WTC11 (cell line): ENCODE measurements at regions of chr20 and their contacts with region 1.

Region 1: GRCh38 chr20:32779500-32780211 is 17.5 kb downstream of the DNMT3B start:
- DNase-seq: peak; percentile 81
- ATAC-seq: peak; percentile 45
- H3K4me3 Mint-ChIP-seq: no peak overlapping the region
- H3K27ac Mint-ChIP-seq: no peak overlapping the region
- H3K4me1 Mint-ChIP-seq: peaks cover 75% of the 10 kb centered on the region
- H3K27me3 Mint-ChIP-seq: no peaks in the 10 kb centered on the region
- CTCF ChIP-seq: no peak

Region 2: DNA sequence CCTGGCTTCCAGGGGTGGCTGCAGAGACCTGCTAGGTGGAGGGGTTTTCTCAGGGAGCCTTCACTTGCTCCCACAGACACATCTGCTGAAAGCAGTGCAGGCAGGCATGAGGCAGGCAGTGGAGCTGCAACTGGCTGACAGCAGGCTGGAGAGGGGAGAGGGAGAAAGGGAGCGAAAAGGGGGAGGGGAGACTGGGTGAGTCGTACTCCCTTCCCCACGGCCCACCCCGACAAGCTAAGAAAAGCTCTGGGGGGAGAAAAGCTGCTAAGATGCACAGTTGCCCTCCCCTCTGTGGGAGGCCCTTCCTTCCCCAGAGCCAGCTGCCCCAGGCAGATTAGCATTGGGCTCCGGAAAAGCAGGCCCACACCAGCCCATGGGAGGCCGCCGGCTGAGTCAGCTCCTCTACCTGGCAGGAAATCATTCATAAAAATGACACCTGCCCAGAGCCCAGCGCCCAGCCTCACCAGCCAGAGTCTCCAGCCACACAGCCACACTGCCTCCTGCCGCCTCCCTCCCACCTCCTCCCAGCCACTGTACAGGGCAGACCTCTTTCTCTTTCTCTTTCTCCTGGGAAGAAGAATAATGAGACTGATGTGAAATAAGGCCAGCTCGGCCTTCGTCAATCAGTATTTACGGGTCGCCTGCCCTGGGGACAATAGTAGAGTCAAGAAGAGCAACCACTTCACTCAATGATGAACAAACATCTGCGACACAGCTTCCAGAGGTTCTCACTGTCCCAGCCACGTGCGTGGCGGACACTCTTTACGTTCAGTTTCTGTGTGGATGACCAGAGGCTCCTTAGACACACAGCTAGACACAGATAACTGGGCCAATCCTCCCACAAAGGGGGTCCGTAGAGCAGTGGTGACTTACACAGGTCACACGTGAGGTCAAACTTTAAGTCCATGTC is 98.2 kb before region 1 on chr20:
- CTCF ChIA-PET with region 1: interaction called, 138 read pairs
- POLR2A ChIA-PET with region 1: interaction called, 7 read pairs
- DNase-seq: peak; percentile 63
- ATAC-seq: peak; percentile 80
- H3K4me3 Mint-ChIP-seq: peak overlapping the region; percentile 33
- H3K27ac Mint-ChIP-seq: peak overlapping the region; percentile 86
- H3K4me1 Mint-ChIP-seq: peaks cover 38% of the 10 kb centered on the region
- H3K27me3 Mint-ChIP-seq: no peaks in the 10 kb centered on the region
- CTCF ChIP-seq: no peak

Region 3: GRCh38 chr20:32702706-32703425 is 76.8 kb before region 1 on chr20:
- CTCF ChIA-PET with region 1: interaction called, 11 read pairs
- POLR2A ChIA-PET with region 1: no interaction called
- DNase-seq: peak; percentile 20
- ATAC-seq: peak; percentile 50; the same call in 1 of the 2 replicates
- H3K4me3 Mint-ChIP-seq: no peak overlapping the region
- H3K27ac Mint-ChIP-seq: peak overlapping the region; percentile 81
- H3K4me1 Mint-ChIP-seq: peaks cover 39% of the 10 kb centered on the region
- H3K27me3 Mint-ChIP-seq: no peaks in the 10 kb centered on the region
- CTCF ChIP-seq: no peak

Region 4: GRCh38 chr20:32731393-32732266 is 48.0 kb before region 1 on chr20:
- CTCF ChIA-PET with region 1: interaction called, 11 read pairs
- POLR2A ChIA-PET with region 1: no interaction called
- DNase-seq: no peak
- ATAC-seq: no peak
- H3K4me3 Mint-ChIP-seq: no peak overlapping the region
- H3K27ac Mint-ChIP-seq: peak overlapping the region; percentile 52
- H3K4me1 Mint-ChIP-seq: peaks cover 16% of the 10 kb centered on the region
- H3K27me3 Mint-ChIP-seq: no peaks in the 10 kb centered on the region
- CTCF ChIP-seq: no peak

Region 5: DNA sequence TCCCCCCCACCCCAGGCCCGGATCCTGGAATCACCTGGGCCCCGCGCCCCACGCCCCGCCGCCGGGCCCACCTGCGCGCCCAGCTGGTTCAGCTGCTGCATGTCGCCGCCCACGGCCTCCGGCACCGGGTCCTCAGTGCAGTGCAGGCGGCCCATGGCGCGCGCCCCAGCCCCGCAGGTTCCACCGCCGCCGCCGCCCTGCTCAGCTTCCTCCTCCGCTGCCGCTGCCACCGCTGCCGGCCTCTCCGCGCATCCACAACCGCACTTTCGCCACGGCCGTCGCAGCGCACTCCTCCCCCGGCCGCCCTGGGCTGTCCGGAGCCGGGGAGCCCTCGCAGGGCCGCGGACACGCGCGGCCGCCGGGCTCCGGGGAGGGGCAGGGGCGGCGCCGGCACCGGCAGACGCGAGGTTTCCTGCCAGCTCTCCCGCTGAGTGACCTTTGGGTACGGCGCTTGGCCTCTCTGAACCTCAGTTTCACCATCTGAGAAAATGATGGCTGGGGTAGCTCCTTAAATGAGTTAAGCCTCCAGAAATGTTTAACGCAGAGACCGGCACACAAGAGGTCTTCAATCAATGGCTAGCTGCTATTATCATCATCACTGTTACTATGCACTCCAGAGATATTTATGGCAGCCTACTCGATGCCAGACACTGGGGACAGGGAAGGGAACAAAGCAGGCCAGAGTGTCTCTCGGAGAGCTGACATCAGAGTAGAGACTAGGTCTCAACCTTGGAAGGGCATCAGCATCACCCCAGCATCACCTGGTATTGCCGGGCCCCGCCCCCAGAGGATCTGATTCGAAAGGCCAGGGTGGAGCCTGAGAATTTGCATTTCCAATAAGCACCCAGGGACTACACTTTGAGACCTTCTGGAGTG is 36.2 kb before region 1 on chr20 and contains the start of gene COMMD7:
- CTCF ChIA-PET with region 1: interaction called, 63 read pairs
- POLR2A ChIA-PET with region 1: interaction called, 7 read pairs
- DNase-seq: peak; percentile 71
- ATAC-seq: peak; percentile 83
- H3K4me3 Mint-ChIP-seq: peak within 1 kb of the TSS; percentile 98
- H3K27ac Mint-ChIP-seq: peak within 1 kb of the TSS; percentile 98
- H3K4me1 Mint-ChIP-seq: peaks cover 43% of the 10 kb centered on the region
- H3K27me3 Mint-ChIP-seq: no peaks in the 10 kb centered on the region
- CTCF ChIP-seq: no peak
- total RNA-seq, gene COMMD7: 41.8 to 42.4 TPM (median 42.3 TPM) in 3 replicates

Region 6: GRCh38 chr20:32762149-32762753 is 17.4 kb before region 1 on chr20 and contains the start of gene DNMT3B:
- CTCF ChIA-PET with region 1: interaction called, 121 read pairs
- POLR2A ChIA-PET with region 1: interaction called, 7 read pairs
- DNase-seq: peak; percentile 98
- ATAC-seq: peak; percentile 77; the same call in 1 of the 2 replicates
- H3K4me3 Mint-ChIP-seq: peak within 1 kb of the TSS; percentile 91
- H3K27ac Mint-ChIP-seq: peak within 1 kb of the TSS; percentile 73
- H3K4me1 Mint-ChIP-seq: peaks cover 45% of the 10 kb centered on the region
- H3K27me3 Mint-ChIP-seq: no peaks in the 10 kb centered on the region
- CTCF ChIP-seq: no peak
- total RNA-seq, gene DNMT3B: 638 to 682 TPM (median 641 TPM) in 3 replicates

Region 7: DNA sequence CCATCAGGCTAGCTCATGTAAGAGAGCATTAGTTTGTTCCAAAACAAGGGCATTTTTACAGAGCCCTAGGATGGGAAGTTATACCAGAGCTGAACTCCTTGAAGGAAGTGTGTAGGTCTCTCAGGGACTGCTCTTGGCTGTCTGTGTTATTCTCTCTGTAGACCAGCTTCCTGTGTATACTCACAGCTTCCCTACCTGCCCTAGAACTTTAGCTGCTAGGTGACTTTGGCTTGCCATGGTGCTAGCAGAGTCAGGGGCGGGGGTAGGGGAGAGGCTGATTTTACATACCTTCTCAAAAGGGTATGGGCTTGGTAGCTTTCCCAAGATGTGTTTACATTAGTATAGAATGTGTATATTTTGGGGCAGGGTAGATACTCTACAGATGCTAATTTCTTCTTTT is 57.5 kb after region 1 on chr20:
- CTCF ChIA-PET with region 1: no interaction called
- POLR2A ChIA-PET with region 1: no interaction called
- DNase-seq: no peak
- ATAC-seq: no peak
- H3K4me3 Mint-ChIP-seq: no peak overlapping the region
- H3K27ac Mint-ChIP-seq: no peak overlapping the region
- H3K4me1 Mint-ChIP-seq: peaks cover 5% of the 10 kb centered on the region; the same call in 1 of the 2 replicates
- H3K27me3 Mint-ChIP-seq: no peaks in the 10 kb centered on the region
- CTCF ChIP-seq: no peak

Region 8: GRCh38 chr20:32902456-32903420 is 123.1 kb after region 1 on chr20:
- CTCF ChIA-PET with region 1: no interaction called
- POLR2A ChIA-PET with region 1: no interaction called
- DNase-seq: peak; percentile 60
- ATAC-seq: peak; percentile 78
- H3K4me3 Mint-ChIP-seq: no peak overlapping the region
- H3K27ac Mint-ChIP-seq: no peak overlapping the region
- H3K4me1 Mint-ChIP-seq: no peaks in the 10 kb centered on the region
- H3K27me3 Mint-ChIP-seq: no peaks in the 10 kb centered on the region
- CTCF ChIP-seq: peak; percentile 89